ENCODE measurements at regions of chr9 and their contacts with region 1.

Region 1: GRCh38 chr9:17402309-17402708 is 176.6 kb upstream of the SH3GL2 start:
- DNase-seq: no peak
- ATAC-seq: no peak; the same call in 1 of the 2 replicates
- H3K4me3 ChIP-seq: no peak overlapping the region
- H3K27ac ChIP-seq: no peak overlapping the region
- H3K4me1 ChIP-seq: no peaks in the 10 kb centered on the region
- H3K27me3 ChIP-seq: no peaks in the 10 kb centered on the region
- CTCF ChIP-seq: peak in 2 of 3 experiments; percentile 10 to 16; a peak in 1 of 6 replicates
- POLR2A ChIP-seq: no peak
- RAD21 ChIP-seq: peak; percentile 36; the same call in 1 of the 2 replicates

Region 2: GRCh38 chr9:17063535-17064135 is 338.7 kb before region 1 on chr9:
- CTCF ChIA-PET with region 1: interaction called, 6 read pairs
- POLR2A ChIA-PET with region 1: no interaction called
- RAD21 ChIA-PET with region 1: no interaction called
- intact Hi-C with region 1: loop called (anchors 5 kb)
- DNase-seq: peak; percentile 32
- ATAC-seq: peak; percentile 87
- H3K4me3 ChIP-seq: no peak overlapping the region
- H3K27ac ChIP-seq: no peak overlapping the region
- H3K4me1 ChIP-seq: no peaks in the 10 kb centered on the region
- H3K27me3 ChIP-seq: no peaks in the 10 kb centered on the region
- CTCF ChIP-seq: peak in 2 of 3 experiments; percentile 69 to 84; a peak in 4 of 6 replicates
- POLR2A ChIP-seq: no peak
- RAD21 ChIP-seq: peak; percentile 54

Region 3: GRCh38 chr9:17116400-17116837 is 285.9 kb before region 1 on chr9:
- CTCF ChIA-PET with region 1: interaction called, 8 read pairs
- POLR2A ChIA-PET with region 1: no interaction called
- RAD21 ChIA-PET with region 1: no interaction called
- intact Hi-C with region 1: loop called (anchors 1 kb)
- DNase-seq: peak; percentile 19
- ATAC-seq: peak; percentile 63
- H3K4me3 ChIP-seq: no peak overlapping the region
- H3K27ac ChIP-seq: no peak overlapping the region
- H3K4me1 ChIP-seq: no peaks in the 10 kb centered on the region
- H3K27me3 ChIP-seq: no peaks in the 10 kb centered on the region
- CTCF ChIP-seq: peak; percentile 15 to 56 (median 21); a peak in 3 of 6 replicates
- POLR2A ChIP-seq: no peak
- RAD21 ChIP-seq: peak; percentile 44; the same call in 1 of the 2 replicates

Region 4: DNA sequence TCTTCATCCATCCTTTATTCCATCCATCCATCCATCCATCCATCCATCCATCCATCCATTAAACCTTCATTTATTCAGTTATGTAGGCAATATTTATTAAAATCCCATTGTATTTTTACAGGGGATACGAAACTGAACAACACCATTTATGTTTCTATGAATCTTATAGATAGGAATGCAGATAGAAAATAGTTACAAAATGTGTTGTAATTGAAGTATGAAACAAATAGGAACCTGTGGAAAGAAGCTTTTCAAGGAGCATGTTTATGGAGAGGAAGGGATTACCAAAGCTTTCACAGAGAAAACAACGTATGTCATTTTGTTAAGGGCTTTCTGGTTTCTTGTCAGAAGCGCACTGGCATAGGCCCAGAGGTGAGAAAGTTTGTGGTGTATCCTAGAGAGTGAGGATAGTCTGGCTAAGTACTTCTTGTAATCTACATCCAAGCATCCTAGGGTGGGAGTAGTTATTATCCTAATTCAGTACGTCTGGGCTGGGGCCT is 83.4 kb before region 1 on chr9:
- CTCF ChIA-PET with region 1: no interaction called
- POLR2A ChIA-PET with region 1: no interaction called
- RAD21 ChIA-PET with region 1: no interaction called
- intact Hi-C with region 1: no loop called
- DNase-seq: no peak
- ATAC-seq: no peak
- H3K4me3 ChIP-seq: no peak overlapping the region
- H3K27ac ChIP-seq: no peak overlapping the region
- H3K4me1 ChIP-seq: no peaks in the 10 kb centered on the region
- H3K27me3 ChIP-seq: no peaks in the 10 kb centered on the region
- CTCF ChIP-seq: no peak
- POLR2A ChIP-seq: no peak
- RAD21 ChIP-seq: no peak

Region 5: DNA sequence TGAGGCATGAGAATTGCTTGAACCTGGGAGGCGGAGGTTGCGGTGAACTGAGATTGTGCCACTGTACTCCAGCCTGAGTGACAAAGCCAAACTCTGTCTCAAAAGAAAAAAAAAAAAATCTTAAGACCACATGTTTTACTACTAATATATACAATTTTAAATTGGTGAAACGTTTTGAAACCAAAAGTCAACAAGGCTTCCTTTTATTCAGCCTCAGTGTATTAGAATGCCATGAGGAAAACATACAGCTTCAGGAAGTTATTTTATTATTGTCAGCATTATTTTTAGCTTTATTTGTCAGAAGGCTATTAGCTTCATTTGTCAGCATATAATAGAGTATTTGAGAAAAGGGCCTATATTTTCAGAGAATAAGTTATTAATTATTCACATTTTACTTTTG is 12.7 kb after region 1 on chr9:
- CTCF ChIA-PET with region 1: no interaction called
- POLR2A ChIA-PET with region 1: no interaction called
- RAD21 ChIA-PET with region 1: no interaction called
- intact Hi-C with region 1: no loop called
- DNase-seq: no peak
- ATAC-seq: no peak
- H3K4me3 ChIP-seq: no peak overlapping the region
- H3K27ac ChIP-seq: no peak overlapping the region
- H3K4me1 ChIP-seq: no peaks in the 10 kb centered on the region
- H3K27me3 ChIP-seq: no peaks in the 10 kb centered on the region
- CTCF ChIP-seq: no peak
- POLR2A ChIP-seq: no peak
- RAD21 ChIP-seq: no peak

Region 6: DNA sequence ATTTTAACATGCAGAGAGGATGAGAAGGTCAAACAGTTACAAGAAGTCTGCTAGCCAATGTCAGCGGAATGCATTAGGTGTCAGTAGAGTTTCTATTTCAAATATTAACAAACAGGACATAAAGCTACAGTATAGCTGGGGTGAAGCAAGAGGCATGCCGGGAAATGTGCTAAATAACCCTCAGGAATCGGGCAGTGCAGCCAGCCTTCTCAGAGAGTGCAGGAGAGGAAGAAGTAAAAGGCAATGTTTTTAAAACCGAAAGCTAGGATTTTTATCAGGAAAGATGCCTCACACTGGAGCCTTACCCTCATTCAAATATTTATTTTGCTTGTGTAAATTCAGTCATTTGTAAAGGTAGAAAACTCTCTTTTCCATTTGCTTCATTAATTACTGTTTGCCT is 117.5 kb after region 1 on chr9:
- CTCF ChIA-PET with region 1: no interaction called
- POLR2A ChIA-PET with region 1: no interaction called
- RAD21 ChIA-PET with region 1: no interaction called
- intact Hi-C with region 1: no loop called
- DNase-seq: no peak
- ATAC-seq: no peak
- H3K4me3 ChIP-seq: no peak overlapping the region
- H3K27ac ChIP-seq: no peak overlapping the region
- H3K4me1 ChIP-seq: no peaks in the 10 kb centered on the region
- H3K27me3 ChIP-seq: no peaks in the 10 kb centered on the region
- CTCF ChIP-seq: no peak
- POLR2A ChIP-seq: no peak
- RAD21 ChIP-seq: no peak

Measured in HCT116 (cell line).